ENCODE measurements at regions of chr5 and their contacts with region 1.

Region 1: DNA sequence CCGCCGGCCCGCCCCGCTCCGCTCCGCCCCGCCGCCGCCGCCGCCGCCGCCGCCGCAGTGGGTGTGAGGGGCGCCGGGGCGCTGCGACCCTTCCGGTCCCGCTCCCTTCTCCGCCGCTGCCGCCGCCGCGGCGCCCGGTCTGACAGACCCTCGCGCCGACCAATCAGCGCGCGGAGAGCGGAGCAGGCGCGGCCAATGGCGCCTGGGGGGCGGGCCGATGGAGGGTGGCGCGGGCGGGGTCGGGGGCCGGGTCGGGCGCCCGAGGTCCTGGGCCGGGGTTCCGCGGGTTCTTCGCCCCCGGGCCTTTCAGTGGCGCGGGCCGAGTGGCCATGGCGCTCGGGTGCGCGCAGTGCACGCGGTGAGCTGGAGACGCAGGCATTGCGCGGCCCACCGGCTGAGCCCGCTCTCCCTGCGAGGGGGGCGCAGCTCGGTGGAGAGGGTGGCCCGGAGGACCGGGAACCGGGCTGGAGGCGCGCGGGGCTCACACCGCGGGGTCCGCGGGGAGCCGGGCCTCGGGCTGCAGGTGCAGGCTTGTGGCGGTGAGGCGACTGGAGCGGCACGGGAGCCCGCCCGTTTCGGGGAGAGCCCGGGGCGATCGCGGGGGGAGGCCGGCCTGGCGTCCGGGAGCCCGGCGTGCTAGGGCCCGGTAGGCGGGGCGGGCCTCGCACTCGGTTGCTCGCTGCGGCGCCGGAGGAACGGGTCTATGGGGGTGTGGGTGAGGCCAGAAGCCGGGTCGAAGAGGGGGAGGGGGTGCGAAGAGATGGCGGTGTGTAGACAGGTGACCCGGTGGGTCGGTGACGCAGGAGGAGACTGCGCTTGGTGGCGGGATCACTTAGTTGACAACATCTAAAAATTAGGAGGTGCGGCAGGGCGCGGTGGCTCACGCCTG is at the start of gene MAPK9:
- DNase-seq: peak; percentile 84 to 95 (median 88)
- H3K4me3 ChIP-seq: peak within 1 kb of the TSS in 1 of 2 donors; percentile 74
- H3K4me3 Mint-ChIP-seq: peak within 1 kb of the TSS; percentile 95 to 100 (median 99)
- H3K27ac ChIP-seq: peak within 1 kb of the TSS; percentile 92
- H3K27ac Mint-ChIP-seq: peak within 1 kb of the TSS; percentile 94 to 100 (median 100)
- H3K4me1 ChIP-seq: peaks cover 34% of the 10 kb centered on the region
- H3K4me1 Mint-ChIP-seq: peaks cover 32 to 62% (median 47%) of the 10 kb centered on the region in 4 donors
- H3K27me3 ChIP-seq: no peaks in the 10 kb centered on the region
- H3K27me3 Mint-ChIP-seq: no peaks in the 10 kb centered on the region
- total RNA-seq, gene MAPK9: 39.1 TPM

Region 2: DNA sequence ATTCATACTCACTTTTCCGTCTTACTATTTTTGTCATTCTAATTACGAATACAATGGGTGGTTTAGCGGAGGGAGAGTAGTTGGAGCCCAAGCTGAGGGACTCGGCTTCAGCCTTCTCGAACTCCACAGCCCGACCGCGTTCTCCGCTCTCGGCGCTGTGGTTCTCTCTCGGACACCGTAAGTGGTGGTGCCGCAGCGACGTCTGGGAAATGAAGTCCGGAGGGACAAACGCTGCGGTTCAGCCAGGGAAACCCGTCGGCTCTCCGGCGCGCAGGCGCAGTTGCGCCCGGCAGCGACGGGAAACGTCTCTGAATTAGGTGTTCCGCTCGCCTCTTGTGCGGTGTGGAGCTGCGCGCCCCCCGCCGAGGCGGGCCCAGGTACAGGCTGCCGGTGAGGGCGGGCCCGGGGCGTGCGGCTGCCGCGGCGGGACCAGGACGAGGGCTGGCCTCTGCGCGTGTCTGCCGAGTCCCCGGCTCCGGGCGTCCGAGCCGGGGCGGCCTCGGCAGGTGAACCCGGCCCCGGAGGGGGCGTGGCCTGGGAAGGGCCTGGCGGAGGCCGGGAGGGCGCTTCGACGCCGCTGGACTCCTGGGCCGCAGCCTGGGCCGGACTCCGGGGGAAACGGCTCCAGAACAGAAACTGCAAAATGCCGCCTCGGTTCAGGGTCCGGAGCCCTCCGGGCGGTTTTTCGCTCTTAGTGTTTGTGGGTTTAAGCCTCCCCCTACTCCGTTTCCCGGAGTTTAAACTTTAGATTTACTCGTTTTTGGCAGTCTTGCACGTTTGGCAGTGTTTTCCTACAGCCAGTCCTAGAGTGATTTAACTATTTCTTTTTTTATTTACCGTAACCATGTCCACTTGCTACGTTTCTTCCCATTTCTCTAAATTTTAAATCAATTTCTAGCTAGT is 1268.4 kb before region 1 on chr5 and contains the start of gene ZNF879:
- CTCF ChIA-PET with region 1: no interaction called
- POLR2A ChIA-PET with region 1: no interaction called
- intact Hi-C with region 1: loop called (anchors 2 kb)
- DNase-seq: peak; percentile 93 to 95 (median 94)
- H3K4me3 ChIP-seq: peak within 1 kb of the TSS; percentile 54 to 61
- H3K4me3 Mint-ChIP-seq: peak within 1 kb of the TSS; percentile 92 to 99 (median 96)
- H3K27ac ChIP-seq: peak within 1 kb of the TSS; percentile 66
- H3K27ac Mint-ChIP-seq: peak within 1 kb of the TSS; percentile 82 to 95 (median 93)
- H3K4me1 ChIP-seq: peaks cover 13% of the 10 kb centered on the region
- H3K4me1 Mint-ChIP-seq: peaks cover 8 to 20% (median 11%) of the 10 kb centered on the region in 4 donors
- H3K27me3 ChIP-seq: no peaks in the 10 kb centered on the region
- H3K27me3 Mint-ChIP-seq: peaks cover 2 to 3% of the 10 kb centered on the region in 2 donors
- total RNA-seq, gene ZNF879: 15.9 to 16.3 TPM

Region 3: DNA sequence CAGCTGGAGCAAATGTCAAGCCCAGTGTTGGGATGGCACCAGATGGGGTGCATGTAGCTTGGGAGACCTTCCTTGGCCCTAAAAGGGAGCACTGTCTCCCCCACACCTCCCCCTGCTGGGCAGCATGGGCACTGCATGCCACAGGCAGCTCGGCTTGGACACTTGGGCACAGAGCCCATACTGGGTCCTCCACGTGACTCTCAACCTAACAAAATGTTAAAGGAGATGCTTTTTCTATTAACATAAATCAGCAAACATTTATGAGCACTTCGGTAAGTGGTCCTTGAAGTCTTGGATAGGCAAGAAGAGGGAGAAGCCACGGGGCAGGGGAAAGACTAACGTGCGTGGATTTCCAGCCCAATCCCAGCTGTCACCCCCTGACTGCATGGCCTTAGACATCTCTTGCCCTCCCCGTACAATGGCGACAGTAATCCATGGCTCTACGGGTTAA is 23.6 kb after region 1 on chr5:
- CTCF ChIA-PET with region 1: interaction called, 130 read pairs
- POLR2A ChIA-PET with region 1: interaction called, 25 read pairs
- intact Hi-C with region 1: loop called (anchors 1 kb)
- DNase-seq: peak; percentile 55 to 73 (median 61)
- H3K4me3 ChIP-seq: no peak overlapping the region
- H3K4me3 Mint-ChIP-seq: peak overlapping the region in 1 of 8 donors; percentile 14
- H3K27ac ChIP-seq: no peak overlapping the region
- H3K27ac Mint-ChIP-seq: peak overlapping the region in 1 of 7 donors; percentile 2
- H3K4me1 ChIP-seq: no peaks in the 10 kb centered on the region
- H3K4me1 Mint-ChIP-seq: peaks cover 0 to 15% (median 4%) of the 10 kb centered on the region in 4 donors
- H3K27me3 ChIP-seq: no peaks in the 10 kb centered on the region
- H3K27me3 Mint-ChIP-seq: peaks cover 3 to 6% of the 10 kb centered on the region in 2 donors

Region 4: DNA sequence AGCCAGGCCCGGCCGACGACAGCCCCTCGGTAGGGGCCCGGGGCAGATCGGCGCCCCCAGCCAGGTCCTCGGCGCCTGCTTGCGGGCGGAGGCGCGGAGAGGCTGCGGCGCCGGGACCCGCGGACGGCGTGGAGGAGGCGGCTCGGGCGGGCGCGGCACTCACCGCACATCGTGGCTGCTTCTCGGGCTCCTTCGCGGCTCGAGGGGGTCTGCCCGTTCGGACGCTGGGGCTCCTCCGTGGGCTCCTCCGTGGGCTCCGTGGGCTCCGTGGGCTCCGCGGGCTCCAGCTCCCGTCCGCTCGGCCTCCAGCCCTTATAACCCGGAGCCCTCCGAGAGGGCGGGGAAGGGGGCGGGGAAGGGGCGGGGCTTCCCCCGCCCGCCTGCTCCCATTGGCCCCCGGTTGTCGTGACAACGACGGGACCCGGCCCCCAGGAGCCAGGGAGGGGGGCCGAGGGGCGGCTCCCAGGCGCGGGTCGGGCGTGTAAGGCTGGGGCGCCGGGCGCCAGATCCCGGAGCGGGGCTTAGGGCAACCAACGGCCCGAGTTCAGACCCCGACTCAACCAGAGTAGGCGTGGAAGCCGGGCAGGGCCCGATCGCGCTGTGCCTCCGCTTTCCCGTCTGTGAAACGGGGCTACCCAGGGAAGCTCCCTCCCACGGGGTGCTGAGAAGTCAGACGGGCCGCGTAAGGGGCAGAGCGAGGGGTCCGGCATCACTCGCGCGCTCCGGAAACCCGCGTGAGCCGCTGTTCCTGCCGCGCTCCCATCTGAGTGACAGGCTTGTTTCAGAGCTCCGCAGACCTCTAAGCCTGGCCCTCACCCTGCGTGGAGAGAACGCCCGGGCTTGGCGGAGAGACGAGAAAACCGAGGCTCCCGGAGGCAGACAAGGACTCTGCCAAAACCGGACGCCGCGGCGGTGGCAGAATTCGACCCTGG is 61.1 kb after region 1 on chr5 and contains the start of gene GFPT2:
- CTCF ChIA-PET with region 1: no interaction called
- POLR2A ChIA-PET with region 1: interaction called, 6 read pairs
- intact Hi-C with region 1: loop called (anchors 1 kb)
- DNase-seq: peak; percentile 70 to 76 (median 73)
- H3K4me3 ChIP-seq: peak within 1 kb of the TSS in 1 of 2 donors; percentile 68
- H3K4me3 Mint-ChIP-seq: peak within 1 kb of the TSS; percentile 76 to 87 (median 80)
- H3K27ac ChIP-seq: no peak within 1 kb of the TSS
- H3K27ac Mint-ChIP-seq: peak within 1 kb of the TSS in 2 of 7 donors; percentile 14 to 22
- H3K4me1 ChIP-seq: peaks cover 9% of the 10 kb centered on the region
- H3K4me1 Mint-ChIP-seq: peaks cover 2 to 13% (median 5%) of the 10 kb centered on the region in 4 donors
- H3K27me3 ChIP-seq: peaks cover 17% of the 10 kb centered on the region
- H3K27me3 Mint-ChIP-seq: peaks cover 22 to 26% of the 10 kb centered on the region in 2 donors
- total RNA-seq, gene GFPT2: 0.12 to 1.00 TPM

Region 5: GRCh38 chr5:180494060-180494509 is 201.9 kb after region 1 on chr5 and contains the start of gene CNOT6:
- CTCF ChIA-PET with region 1: no interaction called
- POLR2A ChIA-PET with region 1: no interaction called
- intact Hi-C with region 1: loop called (anchors 2 kb)
- DNase-seq: peak; percentile 92 to 97 (median 96)
- H3K4me3 ChIP-seq: peak within 1 kb of the TSS; percentile 17 to 72
- H3K4me3 Mint-ChIP-seq: peak within 1 kb of the TSS; percentile 91 to 98 (median 94)
- H3K27ac ChIP-seq: peak within 1 kb of the TSS; percentile 84
- H3K27ac Mint-ChIP-seq: peak within 1 kb of the TSS; percentile 91 to 99 (median 96)
- H3K4me1 ChIP-seq: peaks cover 42% of the 10 kb centered on the region
- H3K4me1 Mint-ChIP-seq: peaks cover 24 to 46% (median 38%) of the 10 kb centered on the region in 4 donors
- H3K27me3 ChIP-seq: no peaks in the 10 kb centered on the region
- H3K27me3 Mint-ChIP-seq: no peaks in the 10 kb centered on the region
- total RNA-seq, gene CNOT6: 30.1 to 37.8 TPM